Caco-2 (cell line): ENCODE measurements at regions of chr2 and their contacts with region 1.

Region 1: GRCh38 chr2:88698498-88699233 is 7.2 kb downstream of the RPIA start:
- DNase-seq: peak; percentile 71 to 73
- H3K4me3 ChIP-seq: no peak overlapping the region
- H3K4me3 Mint-ChIP-seq: peak overlapping the region; percentile 42
- H3K27ac Mint-ChIP-seq: peak overlapping the region; percentile 61
- H3K4me1 ChIP-seq: peaks cover 35% of the 10 kb centered on the region
- H3K4me1 Mint-ChIP-seq: peaks cover 25% of the 10 kb centered on the region
- H3K27me3 ChIP-seq: no peaks in the 10 kb centered on the region
- H3K27me3 Mint-ChIP-seq: no peaks in the 10 kb centered on the region
- CTCF ChIP-seq: no peak

Region 2: DNA sequence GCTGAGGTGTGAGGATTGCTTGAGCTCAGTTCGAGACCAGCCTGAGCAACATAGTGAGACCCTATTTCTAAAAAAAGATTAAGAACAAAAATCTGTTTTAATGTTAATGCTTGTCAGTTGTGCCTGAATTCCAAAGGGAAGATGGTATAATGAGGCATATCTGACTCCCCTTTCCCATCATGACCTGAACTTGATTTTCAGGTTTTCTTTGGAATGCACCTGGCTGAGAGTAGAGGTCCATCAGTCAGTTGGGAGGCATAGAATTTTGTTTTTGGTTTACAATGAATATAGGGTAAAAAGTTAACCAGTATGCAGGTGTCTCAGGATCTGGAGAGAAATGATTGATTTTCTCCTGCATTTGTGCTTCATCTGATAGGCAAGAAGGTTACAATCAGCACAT is 13.2 kb after region 1 on chr2:
- CTCF ChIA-PET with region 1: interaction called, 4 read pairs
- POLR2A ChIA-PET with region 1: no interaction called
- intact Hi-C with region 1: loop called (anchors 1 kb)
- DNase-seq: peak in 1 of 2 experiments; percentile 23
- H3K4me3 ChIP-seq: no peak overlapping the region
- H3K4me3 Mint-ChIP-seq: no peak overlapping the region
- H3K27ac Mint-ChIP-seq: no peak overlapping the region
- H3K4me1 ChIP-seq: peaks cover 31% of the 10 kb centered on the region
- H3K4me1 Mint-ChIP-seq: peaks cover 53% of the 10 kb centered on the region
- H3K27me3 ChIP-seq: no peaks in the 10 kb centered on the region
- H3K27me3 Mint-ChIP-seq: no peaks in the 10 kb centered on the region
- CTCF ChIP-seq: no peak

Region 3: GRCh38 chr2:88855620-88856408 is 157.1 kb after region 1 on chr2:
- CTCF ChIA-PET with region 1: no interaction called
- POLR2A ChIA-PET with region 1: no interaction called
- intact Hi-C with region 1: no loop called
- DNase-seq: no peak
- H3K4me3 ChIP-seq: no peak overlapping the region
- H3K4me3 Mint-ChIP-seq: no peak overlapping the region
- H3K27ac Mint-ChIP-seq: no peak overlapping the region
- H3K4me1 ChIP-seq: peaks cover 15% of the 10 kb centered on the region
- H3K4me1 Mint-ChIP-seq: peaks cover 13% of the 10 kb centered on the region
- H3K27me3 ChIP-seq: no peaks in the 10 kb centered on the region
- H3K27me3 Mint-ChIP-seq: peaks cover 10% of the 10 kb centered on the region
- CTCF ChIP-seq: no peak